ENCODE measurements at regions of chr4 and their contacts with region 1.

Region 1: GRCh38 chr4:55345980-55346850 is at the start of gene SRD5A3:
- DNase-seq: peak; percentile 90
- ATAC-seq: peak; percentile 84
- H3K4me3 ChIP-seq: peak within 1 kb of the TSS; percentile 86
- H3K27ac ChIP-seq: peak within 1 kb of the TSS; percentile 81
- H3K4me1 ChIP-seq: peaks cover 49% of the 10 kb centered on the region
- H3K27me3 ChIP-seq: no peaks in the 10 kb centered on the region
- CTCF ChIP-seq: peak; percentile 96
- total RNA-seq, gene SRD5A3: 15.2 and 24.0 TPM in 2 replicates

Region 2: DNA sequence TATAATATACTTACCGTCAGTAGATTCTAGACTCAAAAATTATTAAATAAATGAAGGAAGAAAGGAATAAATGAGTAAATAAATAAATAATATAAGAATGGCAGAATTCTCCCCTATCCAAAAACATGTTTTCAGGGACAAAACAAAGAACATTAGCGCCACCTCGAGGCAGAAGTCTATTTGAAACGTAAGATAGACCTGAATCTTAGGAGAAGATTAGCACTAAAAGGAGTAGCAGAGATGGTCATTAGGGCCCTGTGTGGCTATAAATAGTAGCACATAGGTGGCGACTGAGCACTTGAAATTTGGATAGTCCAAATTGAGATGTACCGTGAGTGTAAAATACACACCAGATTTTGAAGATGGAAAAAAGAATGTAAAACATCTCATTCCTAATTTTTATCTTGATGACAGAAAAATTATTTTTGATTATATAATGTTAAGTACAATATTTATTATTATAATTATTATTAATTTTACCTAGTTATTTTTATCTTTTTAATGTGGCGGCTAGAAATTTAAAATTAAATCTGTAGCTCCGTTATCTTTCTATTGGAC is 24.4 kb before region 1 on chr4:
- CTCF ChIA-PET with region 1: interaction called, 3 read pairs
- POLR2A ChIA-PET with region 1: no interaction called
- intact Hi-C with region 1: loop called (anchors 1 kb)
- DNase-seq: peak; percentile 98
- ATAC-seq: peak; percentile 70
- H3K4me3 ChIP-seq: no peak overlapping the region
- H3K27ac ChIP-seq: no peak overlapping the region
- H3K4me1 ChIP-seq: peaks cover 11% of the 10 kb centered on the region
- H3K27me3 ChIP-seq: no peaks in the 10 kb centered on the region
- CTCF ChIP-seq: peak; percentile 92

Region 3: GRCh38 chr4:55378617-55379463 is 32.6 kb after region 1 on chr4:
- CTCF ChIA-PET with region 1: no interaction called
- POLR2A ChIA-PET with region 1: no interaction called
- intact Hi-C with region 1: loop called (anchors 1 kb)
- DNase-seq: peak; percentile 99
- ATAC-seq: peak; percentile 94
- H3K4me3 ChIP-seq: peak overlapping the region; percentile 55
- H3K27ac ChIP-seq: peak overlapping the region; percentile 83
- H3K4me1 ChIP-seq: peaks cover 20% of the 10 kb centered on the region
- H3K27me3 ChIP-seq: no peaks in the 10 kb centered on the region
- CTCF ChIP-seq: no peak

Region 4: GRCh38 chr4:55424791-55425190 is 78.6 kb after region 1 on chr4:
- CTCF ChIA-PET with region 1: no interaction called
- POLR2A ChIA-PET with region 1: no interaction called
- intact Hi-C with region 1: loop called (anchors 5 kb)
- DNase-seq: no peak
- ATAC-seq: no peak
- H3K4me3 ChIP-seq: no peak overlapping the region
- H3K27ac ChIP-seq: no peak overlapping the region
- H3K4me1 ChIP-seq: no peaks in the 10 kb centered on the region
- H3K27me3 ChIP-seq: no peaks in the 10 kb centered on the region
- CTCF ChIP-seq: no peak

Region 5: GRCh38 chr4:55468724-55469123 is 122.5 kb after region 1 on chr4:
- CTCF ChIA-PET with region 1: no interaction called
- POLR2A ChIA-PET with region 1: interaction called, 15 read pairs
- intact Hi-C with region 1: no loop called
- DNase-seq: peak; percentile 72
- ATAC-seq: peak; percentile 68
- H3K4me3 ChIP-seq: no peak overlapping the region
- H3K27ac ChIP-seq: no peak overlapping the region
- H3K4me1 ChIP-seq: peaks cover 19% of the 10 kb centered on the region
- H3K27me3 ChIP-seq: no peaks in the 10 kb centered on the region
- CTCF ChIP-seq: no peak

Region 6: GRCh38 chr4:55503164-55503563 is 156.9 kb after region 1 on chr4:
- CTCF ChIA-PET with region 1: no interaction called
- POLR2A ChIA-PET with region 1: no interaction called
- intact Hi-C with region 1: no loop called
- DNase-seq: peak; percentile 85
- ATAC-seq: peak; percentile 98
- H3K4me3 ChIP-seq: no peak overlapping the region
- H3K27ac ChIP-seq: peak overlapping the region; percentile 35
- H3K4me1 ChIP-seq: peaks cover 10% of the 10 kb centered on the region
- H3K27me3 ChIP-seq: no peaks in the 10 kb centered on the region
- CTCF ChIP-seq: no peak

Region 7: GRCh38 chr4:55554453-55555030 is 208.3 kb after region 1 on chr4:
- CTCF ChIA-PET with region 1: interaction called, 9 read pairs
- POLR2A ChIA-PET with region 1: no interaction called
- intact Hi-C with region 1: loop called (anchors 1 kb)
- DNase-seq: peak; percentile 71
- ATAC-seq: 0 out of 2 replicates have a peak, but pooled peaks have one; percentile 4
- H3K4me3 ChIP-seq: no peak overlapping the region
- H3K27ac ChIP-seq: no peak overlapping the region
- H3K4me1 ChIP-seq: peaks cover 26% of the 10 kb centered on the region
- H3K27me3 ChIP-seq: no peaks in the 10 kb centered on the region
- CTCF ChIP-seq: peak; percentile 83